Caco-2 (cell line): ENCODE measurements at regions of chr13 and their contacts with region 1.

Region 1: GRCh38 chr13:80979035-80979641 is 638.2 kb upstream of the SPRY2 start:
- DNase-seq: peak; percentile 67 to 69
- H3K4me3 ChIP-seq: no peak overlapping the region
- H3K4me3 Mint-ChIP-seq: no peak overlapping the region
- H3K27ac Mint-ChIP-seq: no peak overlapping the region
- H3K4me1 ChIP-seq: peaks cover 8% of the 10 kb centered on the region
- H3K4me1 Mint-ChIP-seq: no peaks in the 10 kb centered on the region
- H3K27me3 ChIP-seq: no peaks in the 10 kb centered on the region
- H3K27me3 Mint-ChIP-seq: no peaks in the 10 kb centered on the region
- CTCF ChIP-seq: peak; percentile 89 to 90

Region 2: DNA sequence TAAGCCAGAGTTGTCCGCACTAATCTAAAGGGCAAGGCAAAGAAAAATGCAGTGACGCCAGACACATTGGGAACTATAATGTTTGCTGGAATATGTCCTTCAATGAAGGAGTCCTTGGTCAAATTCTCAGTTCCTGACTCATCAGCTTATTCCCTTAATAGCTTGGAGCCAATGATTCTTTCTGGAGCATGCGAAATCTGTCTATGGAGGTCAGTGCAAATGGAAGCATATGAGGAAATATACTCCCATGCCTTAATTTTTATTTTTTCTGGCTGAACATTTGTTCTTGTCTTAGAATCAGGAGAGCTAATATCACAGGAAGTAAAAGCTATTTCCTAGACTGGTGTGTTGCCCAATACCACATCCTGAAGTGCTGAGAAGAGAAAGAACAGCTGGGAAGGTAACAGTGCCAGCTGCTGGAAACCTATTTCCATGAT is 348.4 kb before region 1 on chr13:
- CTCF ChIA-PET with region 1: no interaction called
- POLR2A ChIA-PET with region 1: no interaction called
- intact Hi-C with region 1: no loop called
- DNase-seq: no peak
- H3K4me3 ChIP-seq: no peak overlapping the region
- H3K4me3 Mint-ChIP-seq: no peak overlapping the region
- H3K27ac Mint-ChIP-seq: no peak overlapping the region
- H3K4me1 ChIP-seq: no peaks in the 10 kb centered on the region
- H3K4me1 Mint-ChIP-seq: no peaks in the 10 kb centered on the region
- H3K27me3 ChIP-seq: no peaks in the 10 kb centered on the region
- H3K27me3 Mint-ChIP-seq: peaks cover 5% of the 10 kb centered on the region
- CTCF ChIP-seq: no peak

Region 3: DNA sequence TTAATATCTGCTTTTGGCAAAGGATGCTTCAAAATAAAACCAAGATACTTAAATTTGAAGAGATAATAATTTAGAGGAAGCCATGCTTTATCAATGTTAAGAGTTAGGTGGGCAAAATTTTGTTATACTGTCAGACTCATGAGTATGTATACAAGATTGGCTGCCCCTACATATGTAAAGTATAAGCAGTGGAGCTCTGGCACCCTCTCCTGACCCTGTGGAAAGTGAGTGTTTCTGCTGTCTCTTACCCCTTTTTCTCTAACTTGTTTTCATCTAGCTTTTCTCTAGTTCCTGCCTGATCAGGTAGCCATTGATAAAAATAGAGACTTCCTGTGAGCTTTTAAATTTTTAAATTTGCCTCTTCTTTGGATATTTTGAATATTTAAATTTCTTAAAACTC is 72.7 kb after region 1 on chr13:
- CTCF ChIA-PET with region 1: no interaction called
- POLR2A ChIA-PET with region 1: no interaction called
- intact Hi-C with region 1: loop called (anchors 1 kb)
- DNase-seq: no peak
- H3K4me3 ChIP-seq: no peak overlapping the region
- H3K4me3 Mint-ChIP-seq: no peak overlapping the region
- H3K27ac Mint-ChIP-seq: no peak overlapping the region
- H3K4me1 ChIP-seq: no peaks in the 10 kb centered on the region
- H3K4me1 Mint-ChIP-seq: no peaks in the 10 kb centered on the region
- H3K27me3 ChIP-seq: no peaks in the 10 kb centered on the region
- H3K27me3 Mint-ChIP-seq: no peaks in the 10 kb centered on the region
- CTCF ChIP-seq: peak in 1 of 2 experiments; percentile 30

Region 4: GRCh38 chr13:81480634-81481033 is 501.5 kb after region 1 on chr13:
- CTCF ChIA-PET with region 1: no interaction called
- POLR2A ChIA-PET with region 1: no interaction called
- intact Hi-C with region 1: loop called (anchors 1 kb)
- DNase-seq: no peak
- H3K4me3 ChIP-seq: no peak overlapping the region
- H3K4me3 Mint-ChIP-seq: no peak overlapping the region
- H3K27ac Mint-ChIP-seq: no peak overlapping the region
- H3K4me1 ChIP-seq: no peaks in the 10 kb centered on the region
- H3K4me1 Mint-ChIP-seq: no peaks in the 10 kb centered on the region
- H3K27me3 ChIP-seq: no peaks in the 10 kb centered on the region
- H3K27me3 Mint-ChIP-seq: no peaks in the 10 kb centered on the region
- CTCF ChIP-seq: peak in 1 of 2 experiments; percentile 33